H1 (cell line): ENCODE measurements at regions of chr1 and their contacts with region 1.

Region 1: DNA sequence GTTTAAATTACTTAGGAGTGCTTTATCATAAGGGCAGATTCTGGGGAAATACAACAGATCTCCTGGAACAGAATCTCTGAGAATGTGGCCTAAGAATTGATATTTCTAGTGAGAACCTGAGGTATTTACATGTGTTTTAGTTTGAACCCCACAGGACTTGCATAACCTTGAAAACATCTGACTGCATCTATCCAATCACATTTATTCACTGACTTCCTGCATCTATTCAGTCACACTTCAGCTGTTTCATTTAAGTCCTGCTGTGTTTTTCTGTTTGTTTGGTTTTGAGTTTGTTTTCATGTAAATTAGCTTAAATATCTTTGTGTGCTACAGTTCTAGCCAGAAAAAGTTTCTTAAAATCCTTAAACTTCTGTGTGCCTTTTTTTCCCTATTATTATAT is 1260.7 kb downstream of the PLA2G4A start:
- DNase-seq: no peak
- H3K4me3 ChIP-seq: no peak overlapping the region; a peak in 1 of 8 replicates
- H3K27ac ChIP-seq: no peak overlapping the region
- H3K4me1 ChIP-seq: no peaks in the 10 kb centered on the region; a peak in 3 of 7 replicates
- H3K27me3 ChIP-seq: no peaks in the 10 kb centered on the region
- CTCF ChIP-seq: no peak
- EP300 ChIP-seq: no peak
- POLR2A ChIP-seq: no peak
- RAD21 ChIP-seq: no peak

Region 2: DNA sequence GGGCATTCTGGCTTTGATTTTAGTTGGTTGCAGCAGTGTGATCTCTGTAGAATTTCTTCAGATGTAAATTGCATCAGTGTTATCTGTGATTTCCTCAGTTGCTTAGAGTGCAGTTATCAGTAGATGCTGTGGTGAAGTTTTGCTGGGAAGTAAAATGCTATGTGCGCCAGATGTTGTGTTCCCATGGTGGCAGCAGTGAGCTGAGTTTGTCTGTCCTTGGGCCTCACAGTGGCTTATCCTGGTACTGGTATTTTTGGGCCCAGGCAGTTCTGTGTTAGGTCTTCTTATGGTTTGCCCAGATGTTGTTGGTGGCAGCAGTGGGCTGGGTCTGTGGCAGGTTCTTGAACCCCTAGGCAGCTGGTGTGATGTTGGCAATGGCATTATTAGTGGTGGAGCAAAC is 18.6 kb before region 1 on chr1:
- CTCF ChIA-PET with region 1: interaction called, 10 read pairs
- POLR2A ChIA-PET with region 1: no interaction called
- DNase-seq: no peak
- H3K4me3 ChIP-seq: no peak overlapping the region
- H3K27ac ChIP-seq: no peak overlapping the region
- H3K4me1 ChIP-seq: no peaks in the 10 kb centered on the region
- H3K27me3 ChIP-seq: no peaks in the 10 kb centered on the region
- CTCF ChIP-seq: peak; percentile 55 to 97 (median 72)
- EP300 ChIP-seq: no peak
- POLR2A ChIP-seq: no peak
- RAD21 ChIP-seq: peak; percentile 66 to 74

Region 3: GRCh38 chr1:188117436-188117835 is 28.0 kb after region 1 on chr1:
- CTCF ChIA-PET with region 1: no interaction called
- POLR2A ChIA-PET with region 1: no interaction called
- DNase-seq: no peak
- H3K4me3 ChIP-seq: no peak overlapping the region
- H3K27ac ChIP-seq: no peak overlapping the region
- H3K4me1 ChIP-seq: no peaks in the 10 kb centered on the region
- H3K27me3 ChIP-seq: no peaks in the 10 kb centered on the region
- CTCF ChIP-seq: no peak
- EP300 ChIP-seq: no peak
- POLR2A ChIP-seq: no peak
- RAD21 ChIP-seq: no peak